ENCODE measurements at regions of chr6 and their contacts with region 1.

Region 1: GRCh38 chr6:26311385-26312095 is 53.5 kb upstream of the BTN3A2 start:
- DNase-seq: no peak
- CTCF ChIP-seq: no peak

Region 2: GRCh38 chr6:26165261-26165790 is 146.2 kb before region 1 on chr6:
- CTCF ChIA-PET with region 1: no interaction called
- POLR2A ChIA-PET with region 1: no interaction called
- DNase-seq: no peak
- CTCF ChIP-seq: no peak

Region 3: DNA sequence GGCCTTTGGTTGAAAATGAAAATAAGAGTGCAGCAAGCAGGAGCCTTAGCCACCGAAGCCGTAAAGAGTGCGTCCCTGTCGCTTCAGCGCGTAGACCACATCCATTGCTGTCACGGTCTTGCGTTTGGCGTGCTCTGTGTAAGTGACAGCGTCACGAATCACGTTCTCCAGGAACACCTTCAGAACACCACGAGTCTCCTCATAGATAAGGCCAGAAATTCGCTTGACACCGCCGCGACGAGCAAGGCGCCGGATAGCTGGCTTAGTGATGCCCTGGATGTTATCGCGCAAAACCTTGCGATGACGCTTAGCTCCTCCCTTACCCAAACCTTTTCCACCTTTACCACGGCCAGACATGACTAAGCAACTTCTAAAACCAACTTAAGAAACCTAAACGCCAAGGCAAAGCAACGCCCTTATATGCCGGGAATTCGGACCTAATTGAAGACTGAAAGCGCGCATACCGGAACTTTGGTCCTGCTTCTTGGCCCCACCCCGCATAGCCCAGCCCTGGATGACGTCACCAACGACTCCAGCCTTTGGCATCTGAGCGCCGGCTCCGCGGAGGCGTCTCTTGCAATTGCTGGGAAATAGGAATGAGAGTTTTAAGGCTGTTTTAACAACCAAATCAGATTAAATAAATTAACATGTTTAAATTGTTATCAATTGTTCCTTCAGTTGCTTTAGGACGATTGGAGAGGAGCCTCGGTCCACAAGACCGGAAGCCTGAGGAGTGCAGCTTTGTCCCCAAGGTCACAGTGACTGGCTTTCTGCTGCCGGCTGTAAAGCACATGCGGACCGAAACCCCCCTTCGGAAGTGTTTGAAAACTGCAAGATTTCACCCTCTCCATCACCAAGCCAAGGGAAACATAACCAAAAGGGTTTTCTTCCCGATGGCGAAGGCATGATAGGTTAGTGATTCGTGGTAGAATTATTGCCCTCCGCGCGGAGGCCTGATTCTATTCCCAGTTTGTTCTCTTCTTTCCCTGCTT is 26.1 kb before region 1 on chr6:
- CTCF ChIA-PET with region 1: interaction called, 10 read pairs
- POLR2A ChIA-PET with region 1: interaction called, 3 read pairs
- DNase-seq: peak; percentile 79
- CTCF ChIP-seq: no peak

Region 4: DNA sequence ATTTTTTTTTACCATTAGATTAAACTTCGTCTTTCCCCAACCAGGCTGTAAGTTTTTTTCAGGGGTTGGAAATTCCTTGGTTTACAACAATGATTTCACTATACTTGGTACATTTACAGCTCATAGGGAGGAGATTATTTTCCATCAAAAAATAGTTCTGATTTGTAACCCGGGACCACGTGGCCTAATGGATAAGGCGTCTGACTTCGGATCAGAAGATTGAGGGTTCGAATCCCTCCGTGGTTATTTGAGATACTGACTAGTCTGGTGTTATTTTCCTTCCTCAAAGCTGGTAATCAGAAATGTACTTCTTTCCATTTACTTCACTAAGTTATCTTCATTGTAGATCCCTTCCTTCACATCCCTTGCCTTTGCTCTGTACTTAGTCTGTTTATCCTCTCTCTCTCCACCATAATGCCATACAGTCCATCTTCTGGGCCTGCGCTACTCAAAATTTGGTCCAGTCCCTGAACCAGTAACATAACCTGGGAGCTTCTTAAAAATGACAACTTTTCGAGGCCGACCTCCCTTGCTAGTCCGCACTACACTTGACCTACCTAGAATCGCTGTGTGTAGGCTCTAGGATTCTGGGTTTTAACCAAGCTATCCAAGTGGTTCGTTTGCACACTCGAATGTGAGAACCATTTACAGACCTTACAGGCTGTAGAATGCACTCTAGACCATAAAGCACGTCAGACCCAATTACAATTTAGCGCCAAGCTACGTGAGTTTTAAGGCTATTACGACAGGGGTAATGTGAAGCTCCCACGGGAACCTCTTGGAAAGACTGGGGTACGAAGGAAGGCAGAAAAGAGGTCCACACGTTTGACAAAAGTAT is 11.3 kb after region 1 on chr6:
- CTCF ChIA-PET with region 1: interaction called, 10 read pairs
- POLR2A ChIA-PET with region 1: no interaction called
- DNase-seq: peak; percentile 37
- CTCF ChIP-seq: no peak

Region 5: GRCh38 chr6:26351544-26351953 is 40.0 kb after region 1 on chr6:
- CTCF ChIA-PET with region 1: no interaction called
- POLR2A ChIA-PET with region 1: no interaction called
- DNase-seq: no peak
- CTCF ChIP-seq: no peak

Region 6: GRCh38 chr6:26394289-26394688 is 82.7 kb after region 1 on chr6:
- CTCF ChIA-PET with region 1: no interaction called
- POLR2A ChIA-PET with region 1: no interaction called
- DNase-seq: no peak
- CTCF ChIP-seq: no peak